ENCODE measurements at regions of chr2 and their contacts with region 1.

Region 1: DNA sequence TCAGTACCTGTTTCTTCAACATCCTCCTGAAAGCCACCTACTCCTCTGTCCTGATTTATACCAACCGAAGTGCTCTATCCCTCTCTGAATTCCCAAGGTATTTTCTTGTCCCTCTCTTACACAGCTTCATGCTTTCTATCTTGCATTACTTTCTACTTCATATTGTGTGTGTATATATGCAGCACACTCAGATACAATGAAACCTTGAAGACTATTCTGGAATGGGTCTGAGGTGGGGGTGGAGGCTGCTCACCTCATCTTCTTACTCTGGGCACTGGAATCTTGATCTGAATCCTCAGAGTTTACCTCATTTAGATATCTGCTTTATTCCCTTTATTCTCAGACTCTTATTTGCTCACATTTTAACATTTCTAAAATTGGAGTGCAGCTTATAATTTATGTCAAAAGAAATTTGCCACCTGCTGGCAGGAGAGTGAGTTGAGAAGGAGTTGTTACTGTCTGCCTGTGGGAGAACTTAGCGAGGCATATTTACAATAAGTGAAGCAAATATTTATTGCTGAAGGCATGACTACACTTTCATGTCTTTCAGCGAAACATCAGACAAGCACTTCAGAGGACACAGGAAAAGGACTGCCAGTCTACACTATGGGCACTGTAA is 16.6 kb upstream of the KIAA2012 start:
- DNase-seq: no peak
- ATAC-seq: no peak
- H3K4me3 ChIP-seq: no peak overlapping the region
- H3K27ac ChIP-seq: no peak overlapping the region
- H3K4me1 ChIP-seq: peaks cover 0 to 11% (median 8%) of the 10 kb centered on the region in 9 donors
- H3K27me3 ChIP-seq: peaks cover 0 to 25% (median 6%) of the 10 kb centered on the region in 7 donors
- CTCF ChIP-seq: peak in 6 of 9 donors; percentile 16 to 48 (median 34)

Region 2: GRCh38 chr2:201795607-201796477 is 260.7 kb before region 1 on chr2:
- intact Hi-C with region 1: loop called in 1 of 10 experiments (anchors 10 kb)
- DNase-seq: peak in 1 of 2 donors; percentile 4
- ATAC-seq: peak in 5 of 8 donors; percentile 53 to 68 (median 62)
- H3K4me3 ChIP-seq: no peak overlapping the region
- H3K27ac ChIP-seq: no peak overlapping the region
- H3K4me1 ChIP-seq: no peaks in the 10 kb centered on the region
- H3K27me3 ChIP-seq: peaks cover 0 to 7% (median 0%) of the 10 kb centered on the region in 7 donors
- CTCF ChIP-seq: peak; percentile 40 to 73 (median 66)

Region 3: DNA sequence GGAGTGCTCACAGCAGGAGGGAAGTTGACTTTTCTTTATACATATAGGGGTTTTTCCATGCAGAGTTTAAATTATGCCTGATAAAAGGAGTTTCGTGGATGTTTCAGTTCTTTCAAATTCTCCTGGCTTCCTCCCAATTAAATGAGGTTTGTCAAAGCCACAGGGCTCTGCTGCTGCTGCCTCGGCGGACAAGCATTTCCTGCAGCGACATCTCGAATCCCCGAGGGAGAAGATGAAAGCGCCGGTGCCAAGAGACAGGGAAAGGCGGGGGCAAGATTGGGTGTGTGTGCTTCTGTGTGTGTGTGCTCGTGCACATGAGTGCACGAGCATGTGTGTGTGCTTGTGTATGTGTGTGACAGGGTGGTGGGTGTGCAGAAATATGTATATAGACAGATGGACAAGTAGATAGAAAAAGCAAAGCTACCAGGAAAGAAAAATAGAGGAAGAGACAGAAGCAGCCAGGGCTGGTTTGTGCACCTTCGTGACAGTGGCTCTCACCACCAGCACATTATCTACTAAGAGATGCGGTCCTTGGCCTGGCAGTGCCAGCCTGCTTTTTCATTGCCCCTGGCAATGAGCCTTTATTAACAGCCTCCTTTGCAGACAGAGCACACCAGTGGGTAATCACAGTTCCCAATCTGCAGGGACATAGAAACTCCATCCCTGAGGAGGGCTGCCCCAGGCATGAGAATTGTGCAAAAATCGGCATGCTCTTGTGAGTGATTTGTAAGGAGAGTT is 174.0 kb before region 1 on chr2:
- intact Hi-C with region 1: loop called in 1 of 10 experiments (anchors 10 kb)
- DNase-seq: peak; percentile 29 to 54
- ATAC-seq: peak in 4 of 8 donors; percentile 21 to 52 (median 29)
- H3K4me3 ChIP-seq: no peak overlapping the region
- H3K27ac ChIP-seq: peak overlapping the region in 2 of 10 donors; percentile 81 to 83
- H3K4me1 ChIP-seq: peaks cover 4 to 41% (median 29%) of the 10 kb centered on the region in 9 donors
- H3K27me3 ChIP-seq: peaks cover 0 to 16% (median 4%) of the 10 kb centered on the region in 7 donors
- CTCF ChIP-seq: no peak

Region 4: GRCh38 chr2:202158796-202159195 is 102.3 kb after region 1 on chr2:
- intact Hi-C with region 1: loop called in 1 of 10 experiments (anchors 10 kb)
- DNase-seq: no peak
- ATAC-seq: peak in 5 of 8 donors; percentile 15 to 62 (median 47)
- H3K4me3 ChIP-seq: no peak overlapping the region
- H3K27ac ChIP-seq: no peak overlapping the region
- H3K4me1 ChIP-seq: peaks cover 0 to 14% (median 0%) of the 10 kb centered on the region in 9 donors
- H3K27me3 ChIP-seq: no peaks in the 10 kb centered on the region
- CTCF ChIP-seq: peak in 7 of 9 donors; percentile 27 to 51 (median 40)

Region 5: GRCh38 chr2:202960524-202960923 is 904.0 kb after region 1 on chr2:
- intact Hi-C with region 1: no loop called
- DNase-seq: no peak
- ATAC-seq: no peak
- H3K4me3 ChIP-seq: no peak overlapping the region
- H3K27ac ChIP-seq: no peak overlapping the region
- H3K4me1 ChIP-seq: no peaks in the 10 kb centered on the region
- H3K27me3 ChIP-seq: no peaks in the 10 kb centered on the region
- CTCF ChIP-seq: no peak